ENCODE measurements at regions of chr2 and their contacts with region 1.

Region 1: GRCh38 chr2:169109502-169110409 is 40.4 kb downstream of the DHRS9 start:
- DNase-seq: peak; percentile 91
- H3K4me3 Mint-ChIP-seq: no peak overlapping the region
- H3K27ac Mint-ChIP-seq: no peak overlapping the region
- H3K4me1 Mint-ChIP-seq: peaks cover 40% of the 10 kb centered on the region
- H3K27me3 Mint-ChIP-seq: peaks cover 2% of the 10 kb centered on the region

Region 2: GRCh38 chr2:169038338-169038757 is 71.4 kb before region 1 on chr2:
- intact Hi-C with region 1: loop called (anchors 5 kb)
- DNase-seq: no peak
- H3K4me3 Mint-ChIP-seq: no peak overlapping the region
- H3K27ac Mint-ChIP-seq: no peak overlapping the region
- H3K4me1 Mint-ChIP-seq: peaks cover 10% of the 10 kb centered on the region
- H3K27me3 Mint-ChIP-seq: no peaks in the 10 kb centered on the region

Region 3: DNA sequence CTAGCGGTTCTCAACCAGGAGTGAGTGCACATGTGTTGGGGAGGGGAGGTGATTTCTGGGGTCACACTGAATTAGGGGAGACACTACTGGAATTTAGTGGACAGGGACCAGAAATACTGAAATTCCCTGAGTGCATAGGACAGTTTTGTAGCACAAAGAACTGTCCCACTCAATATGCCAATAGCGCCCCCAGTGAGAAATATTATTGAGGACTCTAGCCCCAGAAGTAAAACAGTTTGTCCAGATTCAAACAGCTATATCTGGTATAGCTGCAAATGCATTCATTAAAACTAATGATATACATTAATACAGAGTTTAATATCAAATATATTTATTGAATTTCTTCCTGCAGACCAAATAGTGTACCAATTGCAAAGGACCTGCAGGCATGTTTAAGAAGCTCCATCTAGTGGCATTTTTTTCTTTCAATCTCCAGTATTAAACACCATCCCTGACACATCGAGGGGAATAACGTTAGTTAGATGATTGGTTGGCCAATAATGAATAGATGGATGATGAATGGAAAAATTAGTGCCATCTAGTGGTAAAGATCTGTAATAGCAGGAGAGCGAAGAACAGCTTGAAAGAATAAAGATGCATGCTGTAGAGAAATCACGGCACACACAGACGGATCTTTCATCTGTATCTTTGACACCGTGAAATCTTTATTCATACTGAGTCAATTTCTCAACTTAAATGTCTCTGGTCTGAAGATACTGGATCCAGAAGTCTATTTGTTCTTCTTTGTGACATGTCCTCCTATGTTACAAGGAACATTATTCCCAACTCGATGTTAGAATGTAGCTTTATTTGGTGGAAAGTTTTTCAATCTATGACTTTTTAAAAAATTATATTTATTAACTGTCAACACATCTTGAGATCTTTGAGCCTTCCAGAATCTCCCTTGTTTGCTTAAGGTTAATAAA is 22.1 kb after region 1 on chr2:
- intact Hi-C with region 1: loop called (anchors 1 kb)
- DNase-seq: peak; percentile 66
- H3K4me3 Mint-ChIP-seq: no peak overlapping the region
- H3K27ac Mint-ChIP-seq: no peak overlapping the region
- H3K4me1 Mint-ChIP-seq: no peaks in the 10 kb centered on the region
- H3K27me3 Mint-ChIP-seq: peaks cover 4% of the 10 kb centered on the region

Region 4: DNA sequence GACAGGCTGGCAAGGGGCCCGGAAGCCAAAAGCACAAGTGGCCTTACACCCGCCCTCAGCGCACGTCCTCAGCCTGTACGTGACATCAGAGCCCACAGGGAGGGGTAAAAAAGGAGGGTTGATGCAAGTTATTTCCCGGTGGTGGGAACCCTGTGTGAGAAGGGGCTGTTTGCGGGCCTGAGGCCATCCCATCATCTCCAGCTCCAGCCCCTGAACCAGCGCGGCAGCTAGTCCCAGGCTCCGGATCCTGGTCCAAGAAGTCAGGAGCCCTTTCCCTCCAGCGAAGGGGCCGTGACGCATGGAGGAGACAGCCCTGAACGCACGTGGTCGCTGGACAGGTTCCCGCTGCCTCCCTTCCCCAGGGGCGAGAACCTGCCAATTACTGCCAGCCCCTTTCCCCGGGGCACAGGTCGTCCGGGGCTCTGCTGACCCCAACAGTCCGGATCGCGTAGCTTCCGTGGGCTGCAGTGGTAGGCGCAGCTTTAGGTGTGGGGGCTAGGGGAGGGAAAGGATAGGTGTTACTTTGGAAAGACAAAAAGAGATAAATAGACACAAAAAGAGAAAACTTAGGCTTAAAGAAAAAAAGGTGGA is 253.9 kb after region 1 on chr2:
- intact Hi-C with region 1: loop called (anchors 10 kb)
- DNase-seq: peak; percentile 86
- H3K4me3 Mint-ChIP-seq: peak overlapping the region; percentile 85
- H3K27ac Mint-ChIP-seq: peak overlapping the region; percentile 93
- H3K4me1 Mint-ChIP-seq: peaks cover 34% of the 10 kb centered on the region
- H3K27me3 Mint-ChIP-seq: peaks cover 53% of the 10 kb centered on the region